Activated naive CD4-positive, alpha-beta T cell treated with anti-CD3 and anti-CD28 coated beads, Interleukin-2, amount 10 ng/mL, durations not matched to agents 7 days and 5 days (primary cell): ENCODE measurements at regions of chr5 and their contacts with region 1.

Region 1: GRCh38 chr5:123423278-123424149 is at the start of gene CEP120:
- DNase-seq: peak; percentile 98
- H3K4me3 Mint-ChIP-seq: no peak within 1 kb of the TSS
- H3K27ac Mint-ChIP-seq: no peak within 1 kb of the TSS
- H3K4me1 Mint-ChIP-seq: peaks cover 27% of the 10 kb centered on the region
- H3K27me3 Mint-ChIP-seq: no peaks in the 10 kb centered on the region

Region 2: GRCh38 chr5:123398058-123398733 is 25.3 kb before region 1 on chr5:
- CTCF ChIA-PET with region 1: no interaction called
- DNase-seq: no peak
- H3K4me3 Mint-ChIP-seq: no peak overlapping the region
- H3K27ac Mint-ChIP-seq: no peak overlapping the region
- H3K4me1 Mint-ChIP-seq: no peaks in the 10 kb centered on the region
- H3K27me3 Mint-ChIP-seq: no peaks in the 10 kb centered on the region

Region 3: GRCh38 chr5:123441408-123441807 is 17.9 kb after region 1 on chr5:
- CTCF ChIA-PET with region 1: interaction called, 16 read pairs
- DNase-seq: no peak
- H3K4me3 Mint-ChIP-seq: no peak overlapping the region
- H3K27ac Mint-ChIP-seq: no peak overlapping the region
- H3K4me1 Mint-ChIP-seq: peaks cover 20% of the 10 kb centered on the region
- H3K27me3 Mint-ChIP-seq: no peaks in the 10 kb centered on the region

Region 4: GRCh38 chr5:123610665-123611405 is 187.3 kb after region 1 on chr5:
- CTCF ChIA-PET with region 1: interaction called, 14 read pairs
- DNase-seq: peak; percentile 26
- H3K4me3 Mint-ChIP-seq: no peak overlapping the region
- H3K27ac Mint-ChIP-seq: no peak overlapping the region
- H3K4me1 Mint-ChIP-seq: no peaks in the 10 kb centered on the region
- H3K27me3 Mint-ChIP-seq: no peaks in the 10 kb centered on the region

Region 5: GRCh38 chr5:123659495-123659894 is 236.0 kb after region 1 on chr5:
- CTCF ChIA-PET with region 1: no interaction called
- DNase-seq: no peak
- H3K4me3 Mint-ChIP-seq: no peak overlapping the region
- H3K27ac Mint-ChIP-seq: no peak overlapping the region
- H3K4me1 Mint-ChIP-seq: no peaks in the 10 kb centered on the region
- H3K27me3 Mint-ChIP-seq: no peaks in the 10 kb centered on the region